ENCODE measurements at regions of chr1 and their contacts with region 1.

Region 1: DNA sequence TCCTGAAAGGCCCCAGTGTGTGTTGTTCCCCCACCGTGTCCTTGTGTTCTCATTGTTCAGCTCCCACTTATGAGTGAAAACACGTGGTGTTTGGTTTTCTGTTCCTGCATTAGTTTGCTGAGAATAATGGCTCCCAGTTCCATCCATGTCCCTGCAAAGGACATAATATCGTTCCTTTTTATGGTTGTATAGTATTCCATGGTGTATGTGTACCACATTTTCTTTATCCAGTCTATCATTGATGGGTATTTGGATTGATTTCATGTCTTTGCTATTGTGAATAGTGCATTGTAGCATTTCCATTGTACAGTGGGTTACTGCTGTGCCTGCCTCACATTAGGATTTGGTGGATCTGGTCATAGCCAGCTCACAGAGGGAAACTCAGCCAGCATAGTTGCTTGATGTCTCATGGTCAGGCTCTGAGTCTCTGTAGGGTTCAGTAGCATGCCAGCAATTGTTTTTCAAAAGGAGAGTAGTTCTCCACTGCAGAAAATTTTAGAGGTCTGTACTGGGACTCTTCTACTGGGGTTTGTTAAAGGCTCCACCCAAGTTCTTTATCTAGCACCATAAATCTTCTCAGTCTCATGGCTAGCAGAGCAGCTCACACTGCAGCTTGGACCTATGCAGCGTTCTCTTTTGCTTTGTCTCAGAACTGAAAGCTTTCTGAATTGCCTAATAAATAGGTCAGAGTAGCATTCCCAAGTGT is 41.0 kb downstream of the RUNX3 start:
- DNase-seq: no peak
- H3K4me3 ChIP-seq: no peak overlapping the region
- H3K27ac ChIP-seq: no peak overlapping the region
- H3K4me1 ChIP-seq: no peaks in the 10 kb centered on the region
- H3K27me3 ChIP-seq: no peaks in the 10 kb centered on the region
- CTCF ChIP-seq: no peak

Region 2: GRCh38 chr1:24756395-24756794 is 132.7 kb before region 1 on chr1:
- CTCF ChIA-PET with region 1: no interaction called
- POLR2A ChIA-PET with region 1: interaction called, 10 read pairs
- intact Hi-C with region 1: no loop called
- DNase-seq: no peak
- H3K4me3 ChIP-seq: no peak overlapping the region
- H3K27ac ChIP-seq: no peak overlapping the region
- H3K4me1 ChIP-seq: peaks cover 26% of the 10 kb centered on the region
- H3K27me3 ChIP-seq: no peaks in the 10 kb centered on the region
- CTCF ChIP-seq: no peak

Measured in A673 (cell line).